Endothelial cell of umbilical vein (primary cell): ENCODE measurements at regions of chr10 and their contacts with region 1.

Region 1: GRCh38 chr10:29735596-29736318 is 101.0 kb upstream of the SVIL start:
- DNase-seq: peak; percentile 89
- H3K4me3 ChIP-seq: peak overlapping the region; percentile 69 to 88 (median 82)
- H3K27ac ChIP-seq: peak overlapping the region; percentile 82
- H3K4me1 ChIP-seq: peaks cover 15% of the 10 kb centered on the region
- H3K27me3 ChIP-seq: no peaks in the 10 kb centered on the region
- CTCF ChIP-seq: peak; percentile 90 to 92
- POLR2A ChIP-seq: peak; percentile 20

Region 2: GRCh38 chr10:29517352-29517923 is 218.3 kb before region 1 on chr10:
- CTCF ChIA-PET with region 1: interaction called, 5 read pairs
- POLR2A ChIA-PET with region 1: no interaction called
- dilution Hi-C with region 1: no loop called
- intact Hi-C with region 1: loop called (anchors 5 kb)
- DNase-seq: peak; percentile 22
- H3K4me3 ChIP-seq: no peak overlapping the region
- H3K27ac ChIP-seq: no peak overlapping the region
- H3K4me1 ChIP-seq: no peaks in the 10 kb centered on the region
- H3K27me3 ChIP-seq: no peaks in the 10 kb centered on the region
- CTCF ChIP-seq: peak; percentile 47 to 57
- POLR2A ChIP-seq: no peak

Region 3: GRCh38 chr10:29658984-29659965 is 76.5 kb before region 1 on chr10:
- CTCF ChIA-PET with region 1: interaction called, 4 read pairs
- POLR2A ChIA-PET with region 1: no interaction called
- dilution Hi-C with region 1: no loop called
- intact Hi-C with region 1: loop called (anchors 1 kb)
- DNase-seq: peak; percentile 98
- H3K4me3 ChIP-seq: no peak overlapping the region
- H3K27ac ChIP-seq: peak overlapping the region; percentile 92
- H3K4me1 ChIP-seq: peaks cover 41% of the 10 kb centered on the region
- H3K27me3 ChIP-seq: no peaks in the 10 kb centered on the region
- CTCF ChIP-seq: peak in 1 of 2 donors; percentile 49
- POLR2A ChIP-seq: peak; percentile 70

Region 4: GRCh38 chr10:29757551-29758297 is 22.0 kb after region 1 on chr10:
- CTCF ChIA-PET with region 1: interaction called, 3 read pairs
- POLR2A ChIA-PET with region 1: interaction called, 4 read pairs
- dilution Hi-C with region 1: no loop called
- intact Hi-C with region 1: loop called (anchors 1 kb)
- DNase-seq: peak; percentile 83
- H3K4me3 ChIP-seq: peak overlapping the region in 1 of 3 experiments; percentile 26
- H3K27ac ChIP-seq: peak overlapping the region; percentile 66
- H3K4me1 ChIP-seq: peaks cover 26% of the 10 kb centered on the region
- H3K27me3 ChIP-seq: no peaks in the 10 kb centered on the region
- CTCF ChIP-seq: no peak
- POLR2A ChIP-seq: no peak

Region 5: DNA sequence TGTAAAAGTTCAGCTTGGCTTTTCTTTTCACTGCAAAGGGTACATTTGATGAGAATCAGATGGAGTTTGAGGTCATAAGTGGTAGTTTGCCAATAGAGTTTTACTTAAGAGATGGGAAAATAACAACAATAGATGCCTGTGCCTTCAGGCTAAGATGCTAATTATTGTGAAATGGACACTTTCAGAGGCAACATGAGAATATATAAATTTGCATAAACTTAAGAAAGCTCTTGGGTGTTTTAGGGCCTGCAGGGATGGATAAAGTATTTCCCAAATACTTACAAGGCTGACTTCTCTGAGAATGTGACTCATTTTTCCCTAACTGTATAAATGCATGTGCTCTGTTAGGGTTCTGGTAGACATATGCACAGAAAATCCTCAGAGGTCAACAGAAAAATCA is 99.3 kb after region 1 on chr10:
- CTCF ChIA-PET with region 1: no interaction called
- POLR2A ChIA-PET with region 1: no interaction called
- dilution Hi-C with region 1: no loop called
- intact Hi-C with region 1: no loop called
- DNase-seq: no peak
- H3K4me3 ChIP-seq: no peak overlapping the region
- H3K27ac ChIP-seq: no peak overlapping the region
- H3K4me1 ChIP-seq: no peaks in the 10 kb centered on the region
- H3K27me3 ChIP-seq: no peaks in the 10 kb centered on the region
- CTCF ChIP-seq: no peak
- POLR2A ChIP-seq: no peak

Region 6: DNA sequence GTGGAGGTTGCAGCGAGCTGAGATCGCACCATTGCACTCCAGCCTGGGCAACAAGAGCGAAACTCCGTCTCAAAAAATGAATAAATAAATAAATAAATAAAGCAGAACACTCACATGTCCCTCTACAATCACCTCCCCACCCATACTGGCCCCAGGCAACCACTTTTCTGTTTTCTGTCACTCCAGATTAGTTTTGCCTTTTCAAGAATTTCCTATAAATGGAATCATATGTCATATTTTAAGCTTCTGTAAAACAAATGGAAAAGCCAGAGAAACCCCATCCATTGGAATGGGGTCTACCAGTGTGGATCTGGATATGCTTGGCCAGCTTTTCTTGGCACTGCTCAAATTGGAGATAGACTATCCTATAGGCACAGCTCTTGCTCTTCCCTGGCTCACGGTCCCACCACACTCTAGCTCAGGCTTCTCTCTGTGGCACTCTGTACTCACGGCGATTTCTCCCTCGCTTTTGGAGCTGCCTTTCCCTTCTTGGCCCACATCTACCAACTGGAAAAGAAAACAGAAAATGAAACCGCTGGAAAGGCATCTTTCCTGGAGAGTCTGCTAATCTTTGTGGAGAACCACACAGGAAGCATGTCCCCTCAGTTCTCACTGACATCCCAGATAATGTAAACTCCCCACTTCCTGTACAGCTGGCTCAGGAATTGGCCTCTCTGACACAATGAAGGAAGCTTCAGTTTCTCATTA is 113.5 kb after region 1 on chr10:
- CTCF ChIA-PET with region 1: interaction called, 8 read pairs
- POLR2A ChIA-PET with region 1: no interaction called
- dilution Hi-C with region 1: no loop called
- intact Hi-C with region 1: loop called (anchors 1 kb)
- DNase-seq: peak; percentile 86
- H3K4me3 ChIP-seq: peak overlapping the region in 1 of 3 experiments; percentile 52
- H3K27ac ChIP-seq: peak overlapping the region; percentile 81
- H3K4me1 ChIP-seq: peaks cover 31% of the 10 kb centered on the region
- H3K27me3 ChIP-seq: no peaks in the 10 kb centered on the region
- CTCF ChIP-seq: no peak
- POLR2A ChIP-seq: peak; percentile 64

Region 7: DNA sequence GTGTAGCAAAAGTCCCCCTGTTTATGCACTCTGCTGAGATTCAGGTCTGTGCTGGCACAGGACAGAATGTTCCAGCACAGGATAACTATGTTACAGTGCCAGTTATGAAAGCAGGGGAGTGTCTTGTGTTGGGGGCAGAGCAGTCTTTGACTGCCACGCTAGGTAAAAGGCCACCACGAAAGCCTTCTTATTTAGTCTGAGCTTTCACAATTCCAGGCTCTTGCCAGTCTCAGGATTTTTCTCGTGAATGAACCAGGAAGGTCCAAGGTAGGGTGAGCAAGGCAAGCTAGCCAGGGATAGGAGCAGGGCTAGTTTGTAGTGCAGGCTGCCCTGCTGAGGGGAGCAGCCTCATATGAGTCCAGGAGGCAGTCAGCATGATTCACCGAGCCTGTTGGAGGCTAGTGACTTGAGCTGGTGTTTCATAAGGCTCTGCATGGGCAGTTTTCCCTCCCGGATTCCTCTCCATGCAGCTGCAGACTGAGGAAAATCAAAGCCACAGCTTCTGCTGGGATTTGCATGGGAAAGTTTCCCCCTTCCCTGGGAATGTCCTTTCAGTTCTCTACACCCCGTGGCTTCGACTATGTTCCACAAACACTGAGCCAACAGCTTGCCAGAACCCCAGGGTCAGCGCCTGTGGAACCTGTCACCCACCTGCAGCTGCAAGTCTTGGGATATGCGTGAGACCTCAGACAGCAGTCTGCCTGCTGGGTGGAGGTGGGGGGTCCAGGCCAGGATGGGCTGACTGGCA is 211.4 kb after region 1 on chr10:
- CTCF ChIA-PET with region 1: interaction called, 6 read pairs
- POLR2A ChIA-PET with region 1: no interaction called
- dilution Hi-C with region 1: no loop called
- intact Hi-C with region 1: loop called (anchors 1 kb)
- DNase-seq: peak; percentile 73
- H3K4me3 ChIP-seq: no peak overlapping the region
- H3K27ac ChIP-seq: peak overlapping the region; percentile 33
- H3K4me1 ChIP-seq: peaks cover 51% of the 10 kb centered on the region
- H3K27me3 ChIP-seq: no peaks in the 10 kb centered on the region
- CTCF ChIP-seq: no peak
- POLR2A ChIP-seq: no peak